ENCODE measurements at regions of chr5 and their contacts with region 1.

Region 1: DNA sequence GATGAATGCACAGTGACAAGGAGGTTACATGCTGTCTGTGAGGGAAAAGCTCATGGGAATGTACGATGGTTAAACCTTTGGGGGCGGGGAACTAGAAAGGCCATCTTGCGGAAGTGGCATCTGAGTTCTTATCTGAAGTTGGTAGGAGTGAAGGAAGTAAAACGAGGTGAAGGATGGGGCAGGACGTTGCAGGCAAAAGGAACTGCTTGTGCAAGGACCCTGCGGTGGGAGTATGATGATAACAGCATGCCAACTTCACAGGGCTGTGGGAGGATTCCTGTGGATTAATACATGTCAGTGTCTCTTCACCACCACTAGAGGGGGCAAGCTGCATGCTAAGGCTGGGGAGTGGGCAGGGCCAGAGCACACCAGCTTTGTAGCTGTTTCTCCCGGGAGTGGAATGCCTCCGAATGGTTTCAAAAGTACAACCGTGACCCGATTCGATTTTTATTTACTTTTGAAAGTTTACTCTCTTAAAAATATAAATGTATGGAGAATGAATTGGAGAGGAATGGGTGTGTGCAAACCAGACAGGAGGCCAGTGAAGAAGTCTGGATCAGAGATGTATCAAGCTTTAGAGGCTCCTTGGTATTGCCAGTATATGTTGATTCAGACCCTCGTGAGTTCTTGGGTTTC is 62.5 kb downstream of the CYFIP2 start:
- DNase-seq: peak; percentile 87

Region 2: DNA sequence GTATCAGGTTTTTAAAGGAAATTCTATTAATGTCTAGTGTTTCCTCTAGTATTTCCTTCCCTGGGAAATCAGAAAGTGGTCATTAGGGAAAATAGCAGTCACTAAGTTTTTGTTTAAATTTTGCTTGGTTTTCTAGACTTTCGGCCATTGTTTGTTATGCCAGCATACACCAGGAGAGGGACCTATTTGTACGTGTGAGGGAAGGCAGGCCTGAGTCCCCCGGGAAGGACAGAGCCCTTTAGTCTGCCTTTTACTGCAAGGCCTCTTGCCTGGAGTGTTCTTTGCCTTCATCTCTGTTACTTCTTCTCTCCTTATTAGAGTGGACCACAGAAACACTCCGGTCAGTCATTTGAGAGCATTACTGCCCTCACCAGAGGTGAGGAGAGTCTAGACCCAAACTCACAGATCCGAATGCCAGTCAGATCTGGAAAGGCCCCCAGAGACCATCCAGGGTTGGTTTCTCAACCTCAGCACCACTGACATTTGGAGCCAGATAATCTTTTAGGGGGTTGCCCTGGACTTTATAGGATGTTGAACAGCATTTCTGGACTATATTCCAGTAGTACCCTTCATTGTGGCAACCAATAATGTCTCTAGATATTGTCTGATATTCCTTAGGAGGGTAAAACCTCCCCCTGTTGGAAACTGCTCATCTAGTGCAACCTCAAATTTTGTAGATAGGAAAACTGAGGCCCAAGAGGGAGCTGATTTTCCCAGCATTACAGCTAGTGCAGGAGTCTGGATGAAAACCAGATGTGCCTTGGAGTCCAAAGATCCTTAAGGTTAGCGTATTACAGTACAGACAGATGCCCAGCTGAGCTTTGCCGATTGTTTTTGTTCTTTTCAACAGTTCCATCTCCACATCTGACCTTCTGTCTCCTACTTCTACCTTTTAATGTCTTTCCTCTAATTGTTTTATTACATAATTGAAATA is 38.6 kb after region 1 on chr5:
- CTCF ChIA-PET with region 1: no interaction called
- POLR2A ChIA-PET with region 1: no interaction called
- DNase-seq: peak; percentile 58

Region 3: DNA sequence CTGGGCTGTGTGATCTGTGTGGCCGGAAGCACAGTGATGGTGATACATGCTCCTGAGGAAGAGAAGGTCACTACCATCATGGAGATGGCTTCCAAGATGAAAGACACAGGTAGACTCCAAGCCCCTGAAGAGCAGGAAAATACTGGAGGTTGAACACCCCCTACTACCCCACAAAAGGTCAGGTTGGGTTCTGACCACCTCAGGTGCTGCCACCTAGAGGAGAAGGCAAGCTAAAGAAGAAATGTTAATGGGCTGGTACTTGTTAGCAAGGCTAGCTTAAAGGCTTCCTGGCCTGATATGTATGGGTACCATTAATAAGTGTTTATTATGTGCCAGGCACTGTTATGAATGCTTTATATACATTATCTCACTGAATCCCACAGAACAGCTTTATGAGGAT is 143.3 kb after region 1 on chr5:
- CTCF ChIA-PET with region 1: interaction called, 10 read pairs
- POLR2A ChIA-PET with region 1: no interaction called
- DNase-seq: peak; percentile 54